ENCODE measurements at regions of chr2 and their contacts with region 1.

Region 1: DNA sequence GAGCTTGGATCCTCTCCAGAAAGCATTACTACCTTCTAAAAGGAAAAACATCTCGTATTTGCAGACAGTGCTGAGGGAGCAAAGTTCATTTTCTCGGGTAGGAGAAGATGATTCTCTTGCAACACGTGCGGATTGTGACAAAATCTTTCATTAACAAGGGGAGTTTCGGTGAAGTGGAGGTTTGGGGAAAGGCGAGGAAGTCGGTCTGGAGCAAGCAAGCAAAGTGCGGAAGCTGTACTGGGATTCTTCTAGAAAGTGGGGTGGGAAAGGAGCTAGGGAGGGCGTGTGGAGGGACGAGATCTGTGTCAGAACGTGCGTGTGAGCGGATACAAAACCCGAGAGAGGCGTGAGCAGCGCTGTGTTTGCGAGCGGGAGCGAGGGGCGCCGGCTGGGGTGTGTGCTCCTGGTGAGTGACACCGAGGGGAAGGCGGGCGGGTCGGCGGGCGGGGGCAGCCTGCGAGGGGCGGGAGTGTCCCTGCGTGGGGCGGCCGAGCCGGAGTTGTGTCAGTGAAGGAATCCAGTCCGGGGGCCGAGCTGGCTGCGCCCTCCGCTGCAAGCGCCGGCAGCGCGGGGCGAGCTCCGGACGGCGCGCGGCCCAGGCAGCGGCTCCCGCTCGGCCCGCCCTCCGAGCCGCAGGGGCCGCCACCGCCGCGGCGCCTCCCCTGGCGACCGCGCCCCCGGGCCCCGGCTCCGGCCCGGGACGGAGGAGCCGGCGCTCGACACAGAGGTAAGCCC is at the start of gene SPATS2L:
- DNase-seq: peak; percentile 58 to 82 (median 78)
- H3K4me3 ChIP-seq: peak within 1 kb of the TSS; percentile 33 to 98 (median 74)
- H3K27ac ChIP-seq: peak within 1 kb of the TSS; percentile 66 to 96 (median 79)
- H3K4me1 ChIP-seq: peaks cover 0 to 12% of the 10 kb centered on the region in 2 donors
- H3K27me3 ChIP-seq: no peaks in the 10 kb centered on the region
- CTCF ChIP-seq: peak in 1 of 6 experiments; percentile 1
- POLR2A ChIP-seq: peak in 1 of 2 donors; percentile 57
- total RNA-seq, gene SPATS2L: 30.6 to 66.1 (median 48.7) TPM

Region 2: GRCh38 chr2:199985625-199986207 is 320.6 kb before region 1 on chr2:
- intact Hi-C with region 1: loop called (anchors 10 kb)
- DNase-seq: peak; percentile 67 to 84 (median 71)
- H3K4me3 ChIP-seq: no peak overlapping the region
- H3K27ac ChIP-seq: no peak overlapping the region
- H3K4me1 ChIP-seq: no peaks in the 10 kb centered on the region
- H3K27me3 ChIP-seq: no peaks in the 10 kb centered on the region
- CTCF ChIP-seq: peak; percentile 48 to 65 (median 57)
- POLR2A ChIP-seq: no peak

Region 3: DNA sequence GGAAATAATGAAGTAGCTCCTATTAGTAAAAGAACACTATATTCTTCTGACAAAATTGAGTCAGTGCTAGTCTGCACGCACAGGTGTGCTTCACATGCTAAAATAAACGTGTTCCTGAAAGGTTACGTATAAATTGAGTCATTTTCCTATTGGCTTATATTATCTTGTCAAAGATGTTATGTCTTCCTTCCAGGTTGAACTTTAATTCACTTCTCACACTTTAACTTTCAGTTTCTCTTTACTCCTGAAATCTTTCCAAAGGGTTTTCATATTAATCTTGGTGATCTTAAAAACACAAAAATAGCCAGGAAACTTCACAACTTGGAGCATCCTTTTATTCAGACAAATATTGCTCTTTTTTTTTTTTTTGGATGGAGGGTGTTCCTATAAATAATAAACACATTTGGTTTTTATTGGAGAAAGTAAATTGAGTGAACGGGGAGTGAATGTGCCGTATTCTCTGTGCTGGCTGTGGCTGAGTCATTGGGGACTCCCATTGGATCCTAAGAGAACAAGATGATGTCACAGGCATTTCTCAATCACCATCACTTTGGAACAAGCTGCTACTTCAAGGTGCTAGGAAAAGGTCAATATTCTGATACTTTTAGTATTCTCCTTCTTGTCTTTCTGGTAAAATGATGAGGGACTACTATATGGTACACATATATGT is 150.1 kb before region 1 on chr2:
- intact Hi-C with region 1: no loop called
- DNase-seq: peak; percentile 42 to 77 (median 70)
- H3K4me3 ChIP-seq: peak overlapping the region in 3 of 4 donors; percentile 10 to 39 (median 15)
- H3K27ac ChIP-seq: peak overlapping the region in 2 of 5 donors; percentile 33 to 43
- H3K4me1 ChIP-seq: peaks cover 0 to 5% of the 10 kb centered on the region in 2 donors
- H3K27me3 ChIP-seq: no peaks in the 10 kb centered on the region
- CTCF ChIP-seq: no peak
- POLR2A ChIP-seq: no peak

Region 4: DNA sequence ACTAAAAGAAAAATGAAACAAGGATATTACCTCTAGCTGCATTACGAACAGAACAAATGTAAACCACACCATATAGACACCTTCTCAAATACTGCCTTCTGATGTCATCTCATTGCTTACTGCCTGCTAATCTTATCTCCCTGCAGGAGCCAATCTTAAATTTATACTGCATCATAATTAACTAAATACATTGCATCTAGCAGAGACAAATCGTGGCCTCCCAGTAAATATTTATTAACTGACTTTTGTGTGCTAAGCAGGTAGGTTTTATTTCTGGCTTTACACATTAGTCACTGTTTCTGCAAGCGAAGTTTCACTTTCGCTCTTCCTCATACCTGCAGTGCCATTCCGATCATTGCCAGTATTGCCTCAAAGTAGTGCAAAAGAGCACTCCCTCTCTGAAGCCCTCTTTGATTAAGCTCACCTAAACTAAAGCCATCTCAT is 67.6 kb after region 1 on chr2:
- intact Hi-C with region 1: loop called in 1 of 2 experiments (anchors 10 kb)
- DNase-seq: no peak
- H3K4me3 ChIP-seq: peak overlapping the region in 1 of 4 donors; percentile 40
- H3K27ac ChIP-seq: no peak overlapping the region
- H3K4me1 ChIP-seq: peaks cover 9 to 40% of the 10 kb centered on the region in 2 donors
- H3K27me3 ChIP-seq: no peaks in the 10 kb centered on the region
- CTCF ChIP-seq: no peak
- POLR2A ChIP-seq: no peak

Region 5: GRCh38 chr2:200483729-200484198 is 177.4 kb after region 1 on chr2:
- intact Hi-C with region 1: loop called in 1 of 2 experiments (anchors 5 kb)
- DNase-seq: peak; percentile 35 to 72 (median 62)
- H3K4me3 ChIP-seq: no peak overlapping the region
- H3K27ac ChIP-seq: no peak overlapping the region
- H3K4me1 ChIP-seq: no peaks in the 10 kb centered on the region
- H3K27me3 ChIP-seq: no peaks in the 10 kb centered on the region
- CTCF ChIP-seq: peak; percentile 34 to 55 (median 44)
- POLR2A ChIP-seq: no peak

Measured in adrenal gland (tissue), 19 donors.